Activated naive CD4-positive, alpha-beta T cell treated with anti-CD3 and anti-CD28 coated beads for 36 hours (primary cell): ENCODE measurements at regions of chr19 and their contacts with region 1.

Region 1: GRCh38 chr19:5977785-5978605 is at the start of gene RANBP3:
- DNase-seq: peak; percentile 98
- H3K4me3 Mint-ChIP-seq: peak within 1 kb of the TSS; percentile 98
- H3K27ac Mint-ChIP-seq: peak within 1 kb of the TSS; percentile 95
- H3K4me1 Mint-ChIP-seq: peaks cover 59% of the 10 kb centered on the region
- H3K27me3 Mint-ChIP-seq: no peaks in the 10 kb centered on the region
- total RNA-seq, gene RANBP3: 77.9 to 80.5 TPM

Region 2: GRCh38 chr19:5953680-5954213 is 24.2 kb before region 1 on chr19:
- CTCF ChIA-PET with region 1: interaction called, 4 read pairs
- intact Hi-C with region 1: loop called (anchors 1 kb)
- DNase-seq: peak; percentile 63
- H3K4me3 Mint-ChIP-seq: peak overlapping the region; percentile 36
- H3K27ac Mint-ChIP-seq: peak overlapping the region; percentile 87
- H3K4me1 Mint-ChIP-seq: peaks cover 92% of the 10 kb centered on the region
- H3K27me3 Mint-ChIP-seq: no peaks in the 10 kb centered on the region

Region 3: DNA sequence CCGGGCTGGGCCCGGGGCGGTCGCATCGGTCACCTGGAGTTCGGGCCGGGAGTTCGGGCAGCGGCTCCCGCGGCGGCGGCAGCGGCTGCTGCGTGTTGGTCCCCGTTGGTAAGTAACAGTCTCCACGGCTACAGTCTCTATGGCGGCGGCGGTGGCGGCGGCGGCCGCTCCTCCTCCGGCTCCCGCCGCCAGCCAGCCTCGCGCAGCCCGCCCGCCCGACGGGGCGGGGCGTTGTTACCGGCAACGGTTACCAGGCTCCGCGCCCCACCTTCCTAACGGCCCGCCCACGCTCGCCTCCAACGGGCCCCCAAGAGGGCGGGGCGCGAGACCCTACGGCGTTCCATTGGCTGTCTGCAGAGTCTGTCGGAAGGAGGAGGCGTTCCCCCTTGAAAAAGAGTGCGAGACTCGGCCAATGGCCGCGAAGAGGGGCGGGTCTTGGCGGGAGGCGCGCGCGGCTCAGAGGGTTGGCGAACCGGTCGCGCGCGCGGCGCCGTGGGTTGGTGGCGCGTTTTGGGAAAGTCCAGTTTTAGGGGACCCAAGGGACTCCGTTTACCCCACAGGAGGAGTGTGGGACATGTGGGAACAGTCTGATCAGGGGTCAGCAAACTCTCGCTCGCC is 132.5 kb after region 1 on chr19 and contains the start of gene RFX2:
- CTCF ChIA-PET with region 1: no interaction called
- intact Hi-C with region 1: loop called (anchors 1 kb)
- DNase-seq: peak; percentile 99
- H3K4me3 Mint-ChIP-seq: peak within 1 kb of the TSS; percentile 80
- H3K27ac Mint-ChIP-seq: peak within 1 kb of the TSS; percentile 82
- H3K4me1 Mint-ChIP-seq: peaks cover 22% of the 10 kb centered on the region
- H3K27me3 Mint-ChIP-seq: peaks cover 3% of the 10 kb centered on the region
- total RNA-seq, gene RFX2: 4.7 to 6.0 TPM

Region 4: DNA sequence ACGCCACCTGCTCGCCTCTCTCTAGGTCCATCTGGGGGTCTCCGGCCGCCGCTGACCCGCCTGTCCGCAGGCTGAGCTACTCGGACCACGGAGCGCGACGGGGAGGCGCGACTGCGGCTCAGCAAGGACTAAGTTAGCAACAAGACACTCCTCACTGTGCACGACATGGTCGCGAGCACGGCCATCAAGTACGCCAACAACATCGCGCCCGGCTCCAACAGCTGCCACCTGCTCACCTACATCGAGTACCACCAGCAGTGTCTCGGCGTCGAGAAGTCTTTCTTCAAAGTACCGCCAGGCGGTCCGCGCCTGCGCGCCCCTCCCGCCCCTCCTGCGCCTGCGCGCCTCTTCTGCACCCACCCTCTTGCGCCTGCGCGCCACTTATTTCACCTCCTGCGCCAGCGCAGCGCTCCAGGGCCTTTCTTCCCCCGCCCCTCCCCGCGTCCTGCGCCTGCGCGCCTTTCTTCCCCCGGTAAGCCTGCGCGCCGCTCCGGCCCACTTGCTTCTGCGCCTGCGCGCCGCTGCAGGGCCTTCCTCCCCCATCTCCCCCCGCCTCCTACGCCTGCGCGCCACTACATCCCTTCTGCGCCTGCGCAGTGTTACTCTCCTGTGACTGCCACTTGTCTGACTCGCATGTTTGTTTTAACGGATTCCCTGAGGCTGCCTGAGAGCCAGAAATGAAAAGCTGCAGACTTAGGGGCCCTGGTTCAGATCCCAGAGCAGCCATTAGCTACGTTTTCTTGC is 221.4 kb after region 1 on chr19:
- CTCF ChIA-PET with region 1: no interaction called
- intact Hi-C with region 1: loop called (anchors 2 kb)
- DNase-seq: peak; percentile 99
- H3K4me3 Mint-ChIP-seq: peak overlapping the region; percentile 99
- H3K27ac Mint-ChIP-seq: peak overlapping the region; percentile 79
- H3K4me1 Mint-ChIP-seq: peaks cover 12% of the 10 kb centered on the region
- H3K27me3 Mint-ChIP-seq: no peaks in the 10 kb centered on the region

Region 5: DNA sequence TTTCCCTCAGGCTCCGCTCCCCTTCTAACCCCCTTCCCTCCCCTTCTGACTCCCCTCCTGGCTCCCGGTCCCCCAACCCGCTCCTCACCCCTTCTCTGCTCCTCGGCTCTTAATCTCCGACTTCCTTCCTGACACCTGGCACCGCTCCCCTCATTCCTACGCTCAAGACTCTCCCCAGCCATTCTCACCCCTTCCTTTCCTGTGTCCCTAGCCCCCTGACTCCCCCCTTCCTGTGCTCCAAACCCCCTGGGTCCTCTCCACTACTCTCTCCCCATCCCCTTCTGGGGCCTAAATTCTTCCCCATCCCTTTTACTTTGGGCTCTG is 384.0 kb after region 1 on chr19:
- CTCF ChIA-PET with region 1: no interaction called
- intact Hi-C with region 1: loop called (anchors 5 kb)
- DNase-seq: no peak
- H3K4me3 Mint-ChIP-seq: peak overlapping the region; percentile 98
- H3K27ac Mint-ChIP-seq: peak overlapping the region; percentile 95
- H3K4me1 Mint-ChIP-seq: peaks cover 17% of the 10 kb centered on the region
- H3K27me3 Mint-ChIP-seq: no peaks in the 10 kb centered on the region